Activated T-helper 1 cell treated with anti-CD3 and anti-CD28 coated beads, Interleukin-12 subunit alpha, Interleukin-12 subunit beta, Interleukin-2, Interleukin-4 antibody, amounts not matched to agents 30 ng/mL and 10 ng/mL and 1 ng/mL, durations not matched to agents 14 hours and 24 hours and 36 hours (primary cell): ENCODE measurements at regions of chr13 and their contacts with region 1.

Region 1: DNA sequence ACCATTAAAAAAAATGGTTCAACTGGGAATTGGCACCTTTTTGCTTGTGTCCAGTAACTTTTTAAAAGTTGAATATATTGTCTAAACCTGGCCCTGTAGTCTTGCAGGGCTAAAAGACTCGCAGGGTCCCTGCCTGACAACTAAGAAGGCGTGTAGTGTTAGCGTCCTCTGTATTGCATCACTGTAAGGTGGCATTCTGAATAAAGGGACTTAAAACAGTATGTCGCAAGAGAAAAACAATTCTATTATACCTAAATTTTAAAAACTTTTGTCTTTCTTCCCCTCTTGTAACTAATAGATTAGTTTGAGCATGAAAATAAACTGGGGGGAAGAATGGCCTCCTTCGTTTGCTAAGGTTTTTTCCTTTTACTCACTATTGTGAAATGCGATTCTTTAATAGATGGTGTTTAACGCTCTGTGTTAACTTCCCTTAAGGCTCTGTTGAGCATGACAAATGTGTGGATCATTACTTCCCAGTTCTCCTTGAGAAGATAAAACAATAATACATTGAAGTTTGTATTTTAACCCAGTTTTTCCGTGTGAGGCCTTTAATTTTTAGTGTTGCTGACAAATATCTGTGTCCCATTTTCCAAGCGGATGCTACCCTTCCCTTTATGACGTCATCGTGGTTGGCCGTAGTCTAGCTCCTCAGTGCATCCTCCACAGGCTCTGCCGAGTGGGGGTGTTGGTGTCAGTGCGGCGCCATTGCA is 134.6 kb downstream of the KATNAL1 start:
- DNase-seq: no peak
- H3K4me3 Mint-ChIP-seq: no peak overlapping the region
- H3K27ac Mint-ChIP-seq: no peak overlapping the region
- H3K4me1 Mint-ChIP-seq: peaks cover 41% of the 10 kb centered on the region
- H3K27me3 Mint-ChIP-seq: peaks cover 4% of the 10 kb centered on the region

Region 2: GRCh38 chr13:30078059-30078458 is 94.7 kb before region 1 on chr13:
- intact Hi-C with region 1: no loop called
- DNase-seq: no peak
- H3K4me3 Mint-ChIP-seq: no peak overlapping the region
- H3K27ac Mint-ChIP-seq: no peak overlapping the region
- H3K4me1 Mint-ChIP-seq: no peaks in the 10 kb centered on the region
- H3K27me3 Mint-ChIP-seq: peaks cover 1% of the 10 kb centered on the region

Region 3: DNA sequence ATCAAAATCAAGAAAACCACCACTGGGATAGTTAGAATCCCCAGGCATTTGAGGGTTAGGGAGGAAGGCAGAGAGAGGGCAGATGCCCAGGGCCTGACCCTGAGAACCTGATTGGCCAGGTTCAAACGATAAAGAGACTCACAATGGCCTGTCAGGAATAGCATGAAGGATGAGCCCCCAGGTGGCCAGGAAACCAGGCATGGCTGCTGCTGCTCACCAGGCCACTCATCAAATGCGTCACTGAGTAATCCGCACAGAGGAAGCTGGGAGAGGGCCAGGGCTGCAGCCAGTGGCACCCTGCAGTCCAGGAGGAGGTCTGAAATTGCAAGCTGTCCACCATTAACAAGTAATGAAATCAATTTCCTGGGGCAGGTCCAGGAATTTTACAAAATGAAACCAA is 23.3 kb after region 1 on chr13:
- intact Hi-C with region 1: loop called (anchors 2 kb)
- DNase-seq: no peak
- H3K4me3 Mint-ChIP-seq: no peak overlapping the region
- H3K27ac Mint-ChIP-seq: no peak overlapping the region
- H3K4me1 Mint-ChIP-seq: no peaks in the 10 kb centered on the region
- H3K27me3 Mint-ChIP-seq: no peaks in the 10 kb centered on the region